ENCODE measurements at regions of chr9 and their contacts with region 1.

Region 1: GRCh38 chr9:36499174-36499890 is 73.4 kb upstream of the MELK start:
- DNase-seq: no peak
- H3K4me3 ChIP-seq: no peak overlapping the region
- H3K27ac ChIP-seq: no peak overlapping the region
- H3K4me1 ChIP-seq: peaks cover 0 to 32% (median 2%) of the 10 kb centered on the region in 6 donors
- H3K27me3 ChIP-seq: no peaks in the 10 kb centered on the region
- CTCF ChIP-seq: no peak
- POLR2A ChIP-seq: no peak

Region 2: DNA sequence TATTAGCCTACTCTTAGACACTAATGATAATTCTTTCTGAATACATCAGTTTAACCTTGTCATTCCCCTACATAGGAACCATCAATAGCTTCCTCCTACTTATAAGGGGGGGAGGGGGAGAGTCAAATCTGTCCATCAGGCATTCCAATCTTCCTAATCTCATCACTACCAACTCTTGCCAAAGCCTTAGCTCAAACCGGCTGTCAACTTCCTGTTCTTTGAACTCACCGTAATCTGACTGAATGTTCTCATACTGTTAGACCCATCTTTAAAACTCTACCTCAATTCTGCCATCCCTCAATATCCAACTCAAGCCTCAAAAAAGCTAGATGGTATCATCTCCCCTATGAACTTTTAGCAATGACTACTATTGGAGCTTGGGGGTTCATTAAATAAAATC is 57.4 kb before region 1 on chr9:
- intact Hi-C with region 1: loop called (anchors 10 kb)
- DNase-seq: no peak
- H3K4me3 ChIP-seq: no peak overlapping the region
- H3K27ac ChIP-seq: no peak overlapping the region
- H3K4me1 ChIP-seq: peaks cover 0 to 77% (median 36%) of the 10 kb centered on the region in 6 donors
- H3K27me3 ChIP-seq: no peaks in the 10 kb centered on the region
- CTCF ChIP-seq: no peak
- POLR2A ChIP-seq: no peak